GM12878 (cell line): ENCODE measurements at regions of chr14 and their contacts with region 1.

Region 1: DNA sequence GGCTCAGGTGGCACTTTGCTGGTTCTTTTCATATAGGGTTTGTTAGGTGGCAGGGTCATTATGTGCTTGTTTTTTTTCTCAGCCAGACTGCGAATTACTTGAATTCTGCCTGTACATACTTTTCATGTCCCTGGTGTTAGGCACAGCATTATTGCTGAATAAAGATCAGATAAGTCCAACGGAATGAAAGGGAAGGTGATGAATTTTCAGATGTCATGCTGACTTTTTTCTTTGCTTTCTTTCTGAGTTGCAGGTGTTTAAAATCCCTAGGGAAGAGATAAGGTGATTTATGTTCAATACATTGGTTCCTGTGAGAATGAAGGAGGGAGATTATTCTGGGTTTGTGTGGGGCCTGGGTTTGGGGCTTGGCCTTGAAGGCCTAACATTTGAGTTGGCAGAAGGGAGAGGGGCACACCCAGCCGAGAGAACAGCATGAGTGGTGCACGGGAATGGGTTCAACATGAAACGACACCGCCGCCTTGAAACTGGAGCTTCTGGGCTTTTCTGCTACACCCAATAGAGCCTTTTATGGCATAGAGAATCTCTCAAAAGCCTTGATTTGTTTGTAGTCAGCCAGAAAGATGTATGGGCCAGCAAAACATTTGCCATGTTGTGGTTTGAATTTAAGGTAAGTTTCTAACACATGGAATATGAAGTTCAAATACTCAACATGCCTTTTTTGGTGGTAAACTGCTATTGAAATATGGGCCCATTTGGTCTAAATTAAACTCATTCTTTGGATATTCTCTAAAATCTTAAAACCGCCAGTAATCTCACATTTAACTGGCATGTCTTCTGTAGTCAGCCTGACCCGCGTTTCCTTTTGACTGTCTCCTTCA is 477.0 kb downstream of the PCNX1 start:
- DNase-seq: no peak
- ATAC-seq: no peak
- H3K4me3 ChIP-seq: no peak overlapping the region
- H3K27ac ChIP-seq: no peak overlapping the region
- H3K4me1 ChIP-seq: no peaks in the 10 kb centered on the region
- H3K27me3 ChIP-seq: no peaks in the 10 kb centered on the region
- CTCF ChIP-seq: no peak
- EP300 ChIP-seq: no peak
- POLR2A ChIP-seq: no peak
- RAD21 ChIP-seq: no peak

Region 2: GRCh38 chr14:70955543-70956480 is 428.4 kb before region 1 on chr14:
- CTCF ChIA-PET with region 1: no interaction called
- POLR2A ChIA-PET with region 1: no interaction called
- RAD21 ChIA-PET with region 1: no interaction called
- SMC1A ChIA-PET with region 1: no interaction called
- in situ Hi-C with region 1: no loop called
- intact Hi-C with region 1: no loop called
- DNase-seq: no peak
- ATAC-seq: peak; percentile 87
- H3K4me3 ChIP-seq: no peak overlapping the region
- H3K27ac ChIP-seq: no peak overlapping the region
- H3K4me1 ChIP-seq: no peaks in the 10 kb centered on the region
- H3K27me3 ChIP-seq: no peaks in the 10 kb centered on the region
- CTCF ChIP-seq: peak; percentile 71 to 74 (median 73)
- EP300 ChIP-seq: no peak
- POLR2A ChIP-seq: no peak
- RAD21 ChIP-seq: peak; percentile 84

Region 3: DNA sequence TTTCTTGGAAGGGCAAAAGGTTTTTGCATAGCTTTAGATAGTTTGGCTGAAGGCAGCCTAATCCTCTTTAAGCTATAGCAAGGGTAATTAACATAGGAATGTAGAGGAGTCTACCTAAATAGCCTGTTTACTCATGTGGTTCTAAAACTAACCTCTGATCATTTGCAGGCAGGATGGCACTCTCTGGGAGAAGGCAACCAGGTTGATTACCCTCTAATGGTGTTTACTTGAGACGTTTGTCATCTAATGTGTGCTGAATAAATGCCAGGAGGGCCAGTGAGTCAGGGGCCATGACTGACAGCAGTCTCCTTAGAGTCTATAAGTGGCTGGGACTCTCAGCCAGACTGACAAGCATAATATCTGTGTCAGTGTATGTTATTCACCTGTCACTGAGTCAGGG is 190.6 kb before region 1 on chr14:
- CTCF ChIA-PET with region 1: no interaction called
- POLR2A ChIA-PET with region 1: no interaction called
- RAD21 ChIA-PET with region 1: no interaction called
- SMC1A ChIA-PET with region 1: no interaction called
- in situ Hi-C with region 1: no loop called
- intact Hi-C with region 1: no loop called
- DNase-seq: no peak
- ATAC-seq: no peak
- H3K4me3 ChIP-seq: no peak overlapping the region
- H3K27ac ChIP-seq: no peak overlapping the region
- H3K4me1 ChIP-seq: no peaks in the 10 kb centered on the region
- H3K27me3 ChIP-seq: no peaks in the 10 kb centered on the region; a peak in 1 of 4 replicates
- CTCF ChIP-seq: no peak
- EP300 ChIP-seq: no peak
- POLR2A ChIP-seq: no peak
- RAD21 ChIP-seq: no peak

Region 4: GRCh38 chr14:71395151-71395604 is 11.0 kb after region 1 on chr14:
- CTCF ChIA-PET with region 1: interaction called, 3 read pairs
- POLR2A ChIA-PET with region 1: interaction called, 4 read pairs
- RAD21 ChIA-PET with region 1: no interaction called
- SMC1A ChIA-PET with region 1: interaction called, 13 read pairs
- in situ Hi-C with region 1: no loop called
- intact Hi-C with region 1: no loop called
- DNase-seq: no peak
- ATAC-seq: peak; percentile 19
- H3K4me3 ChIP-seq: no peak overlapping the region
- H3K27ac ChIP-seq: no peak overlapping the region
- H3K4me1 ChIP-seq: peaks cover 18% of the 10 kb centered on the region
- H3K27me3 ChIP-seq: no peaks in the 10 kb centered on the region
- CTCF ChIP-seq: no peak
- EP300 ChIP-seq: no peak
- POLR2A ChIP-seq: no peak
- RAD21 ChIP-seq: no peak

Region 5: GRCh38 chr14:71610149-71610548 is 225.9 kb after region 1 on chr14:
- CTCF ChIA-PET with region 1: no interaction called
- POLR2A ChIA-PET with region 1: no interaction called
- RAD21 ChIA-PET with region 1: no interaction called
- SMC1A ChIA-PET with region 1: no interaction called
- in situ Hi-C with region 1: no loop called
- intact Hi-C with region 1: no loop called
- DNase-seq: no peak
- ATAC-seq: no peak
- H3K4me3 ChIP-seq: no peak overlapping the region
- H3K27ac ChIP-seq: no peak overlapping the region
- H3K4me1 ChIP-seq: peaks cover 20% of the 10 kb centered on the region
- H3K27me3 ChIP-seq: no peaks in the 10 kb centered on the region
- CTCF ChIP-seq: no peak
- EP300 ChIP-seq: no peak
- POLR2A ChIP-seq: no peak
- RAD21 ChIP-seq: no peak

Region 6: DNA sequence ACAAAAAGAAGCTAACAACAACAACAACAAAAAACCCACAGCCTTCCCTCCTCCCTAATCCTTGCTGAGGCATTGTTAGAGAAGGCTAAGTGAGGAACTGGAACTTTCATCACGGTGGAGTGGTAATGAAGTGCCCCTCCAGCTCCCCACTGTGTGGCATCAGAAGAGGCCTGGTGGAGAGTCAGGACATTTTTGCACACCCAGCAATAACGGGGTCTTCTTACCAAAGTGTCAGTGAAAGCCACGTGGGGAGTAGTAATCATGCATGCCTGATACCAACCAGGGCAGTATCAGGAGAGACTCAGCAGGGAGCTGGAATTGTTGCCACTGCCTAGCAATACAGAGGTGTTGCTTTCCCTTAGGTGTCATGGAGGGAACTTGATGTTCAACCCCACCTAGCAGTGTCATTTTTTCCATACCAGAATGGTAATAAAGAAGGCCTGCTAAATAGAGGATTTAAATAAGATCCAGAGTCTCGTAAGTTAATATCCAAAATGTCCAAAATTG is 248.3 kb after region 1 on chr14:
- CTCF ChIA-PET with region 1: no interaction called
- POLR2A ChIA-PET with region 1: interaction called, 10 read pairs
- RAD21 ChIA-PET with region 1: no interaction called
- SMC1A ChIA-PET with region 1: no interaction called
- in situ Hi-C with region 1: no loop called
- intact Hi-C with region 1: no loop called
- DNase-seq: no peak
- ATAC-seq: no peak
- H3K4me3 ChIP-seq: no peak overlapping the region
- H3K27ac ChIP-seq: no peak overlapping the region
- H3K4me1 ChIP-seq: peaks cover 11% of the 10 kb centered on the region
- H3K27me3 ChIP-seq: no peaks in the 10 kb centered on the region
- CTCF ChIP-seq: no peak
- EP300 ChIP-seq: no peak
- POLR2A ChIP-seq: no peak
- RAD21 ChIP-seq: no peak